Mammary epithelial cell (primary cell): ENCODE measurements at regions of chr1 and their contacts with region 1.

Region 1: DNA sequence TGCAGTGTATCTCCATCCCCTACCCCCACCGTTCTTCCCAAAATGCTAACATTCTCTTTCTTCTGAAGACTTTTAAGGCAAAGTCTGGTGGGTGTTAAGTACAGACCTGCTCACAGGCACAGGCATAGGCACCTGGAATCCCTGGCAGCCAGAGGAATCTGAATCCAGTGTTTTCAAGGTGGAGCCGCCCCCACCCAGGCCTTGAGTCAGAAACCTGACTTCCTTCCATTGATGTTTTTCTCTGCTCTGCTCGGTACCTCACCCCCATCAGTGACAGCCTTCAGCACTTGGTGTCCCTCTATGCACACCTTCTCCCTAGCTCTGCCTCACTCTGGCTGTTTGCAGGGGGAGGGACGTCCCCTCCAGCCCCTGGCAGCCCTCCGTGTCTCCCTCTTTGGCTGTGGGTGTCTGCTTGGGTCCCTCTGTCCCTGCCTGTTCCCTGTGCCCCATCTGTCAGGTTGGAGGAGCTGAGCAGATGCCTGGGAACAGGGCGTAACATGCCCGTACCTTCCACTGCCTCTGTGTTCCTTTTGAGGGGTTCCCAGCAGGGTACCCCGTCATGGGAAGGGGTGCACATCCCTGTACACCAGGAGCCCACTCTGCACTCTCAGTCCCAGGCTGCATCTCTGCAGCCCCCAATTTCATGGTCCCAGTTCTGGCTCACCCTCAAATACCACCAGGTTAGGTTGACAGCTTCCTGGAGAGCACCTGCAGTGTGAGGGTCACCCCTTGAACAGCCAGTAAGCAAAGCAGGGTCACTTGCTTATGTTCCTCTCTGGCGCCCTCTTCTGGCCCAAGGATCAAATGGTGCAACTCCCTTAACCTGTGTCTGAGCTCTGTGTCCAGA is 6.7 kb downstream of the NCDN start:
- DNase-seq: peak; percentile 71
- H3K4me3 ChIP-seq: no peak overlapping the region
- H3K27ac ChIP-seq: no peak overlapping the region
- H3K4me1 ChIP-seq: peaks cover 29% of the 10 kb centered on the region
- H3K27me3 ChIP-seq: no peaks in the 10 kb centered on the region
- CTCF ChIP-seq: peak; percentile 73 to 89

Region 2: DNA sequence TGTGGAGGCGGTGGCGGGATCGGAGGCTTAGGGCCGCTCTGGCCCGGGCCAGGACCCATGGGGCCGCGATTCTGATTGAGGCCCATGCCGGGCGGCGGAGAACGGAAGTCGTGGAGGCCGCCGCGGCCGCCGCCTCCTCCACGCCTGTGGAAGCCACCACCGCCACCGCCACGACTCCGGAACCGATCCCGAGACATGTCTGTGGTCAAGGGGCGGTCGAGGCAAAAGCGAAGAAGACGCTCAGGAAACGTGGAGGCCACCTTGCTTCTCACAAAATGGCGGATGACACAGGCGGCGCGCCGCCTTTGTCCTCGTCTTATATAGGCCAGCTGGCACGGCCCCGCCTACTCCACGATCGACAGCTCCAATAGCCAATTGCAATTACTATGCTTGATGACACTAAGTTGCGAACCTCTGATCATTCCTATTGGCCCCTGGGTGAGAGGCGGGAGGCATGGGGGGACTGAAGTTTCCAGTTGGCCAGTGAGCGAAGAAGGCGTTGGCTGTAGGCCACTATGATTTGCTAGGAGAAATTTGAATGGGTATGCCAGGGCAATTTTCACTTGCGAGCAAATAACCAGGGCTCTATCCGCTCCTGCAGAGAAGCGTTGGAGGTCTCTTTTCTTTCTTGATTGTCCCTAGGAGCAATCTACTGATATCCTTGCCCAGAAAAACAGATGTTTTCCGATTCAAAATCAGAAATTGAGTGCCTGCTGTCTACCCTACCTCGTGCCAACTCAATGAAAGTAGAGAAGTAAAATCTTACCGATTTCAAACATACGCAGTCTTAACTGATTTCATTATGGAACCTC is 371.2 kb before region 1 on chr1 and contains the start of gene SFPQ:
- CTCF ChIA-PET with region 1: no interaction called
- dilution Hi-C with region 1: no loop called
- in situ Hi-C with region 1: loop called in 1 of 2 experiments (anchors 10 kb)
- intact Hi-C with region 1: loop called (anchors 5 kb)
- DNase-seq: peak; percentile 98
- H3K4me3 ChIP-seq: peak within 1 kb of the TSS; percentile 93 to 100 (median 93)
- H3K27ac ChIP-seq: peak within 1 kb of the TSS; percentile 87
- H3K4me1 ChIP-seq: peaks cover 23% of the 10 kb centered on the region
- H3K27me3 ChIP-seq: no peaks in the 10 kb centered on the region
- CTCF ChIP-seq: no peak
- total RNA-seq, gene SFPQ: 156 to 255 TPM

Region 3: DNA sequence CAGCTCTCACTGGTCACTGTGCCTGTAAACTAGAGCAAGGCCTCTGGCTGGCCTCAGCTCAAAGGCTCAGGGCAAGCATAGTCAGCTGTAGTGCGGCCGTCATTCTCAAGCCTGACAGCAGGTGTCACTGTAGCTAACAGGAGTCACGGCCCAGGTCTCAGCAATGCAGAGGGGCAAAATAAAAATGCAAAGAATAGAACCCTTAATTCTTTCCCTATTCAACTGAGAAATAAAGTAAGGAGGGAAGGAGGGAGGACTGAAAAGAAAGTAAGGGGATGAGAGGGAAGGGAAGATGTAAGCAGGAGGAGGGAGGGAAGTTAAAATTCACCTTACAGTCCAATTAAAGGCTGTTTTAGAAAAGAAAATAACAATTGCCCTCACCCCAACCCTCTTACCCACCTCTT is 113.1 kb before region 1 on chr1:
- CTCF ChIA-PET with region 1: interaction called, 13 read pairs
- dilution Hi-C with region 1: loop called (anchors 5 kb)
- in situ Hi-C with region 1: loop called (anchors 5 kb)
- intact Hi-C with region 1: loop called (anchors 1 kb)
- DNase-seq: peak; percentile 59
- H3K4me3 ChIP-seq: no peak overlapping the region
- H3K27ac ChIP-seq: no peak overlapping the region
- H3K4me1 ChIP-seq: peaks cover 29% of the 10 kb centered on the region
- H3K27me3 ChIP-seq: peaks cover 2% of the 10 kb centered on the region
- CTCF ChIP-seq: peak; percentile 88 to 91

Region 4: GRCh38 chr1:35592991-35593694 is 28.9 kb after region 1 on chr1:
- CTCF ChIA-PET with region 1: no interaction called
- dilution Hi-C with region 1: no loop called
- in situ Hi-C with region 1: no loop called
- intact Hi-C with region 1: no loop called
- DNase-seq: no peak
- H3K4me3 ChIP-seq: no peak overlapping the region
- H3K27ac ChIP-seq: no peak overlapping the region
- H3K4me1 ChIP-seq: no peaks in the 10 kb centered on the region
- H3K27me3 ChIP-seq: no peaks in the 10 kb centered on the region
- CTCF ChIP-seq: no peak

Region 5: GRCh38 chr1:35715568-35716002 is 151.3 kb after region 1 on chr1:
- CTCF ChIA-PET with region 1: interaction called, 5 read pairs
- dilution Hi-C with region 1: no loop called
- in situ Hi-C with region 1: loop called in 1 of 2 experiments (anchors 5 kb)
- intact Hi-C with region 1: loop called (anchors 2 kb)
- DNase-seq: peak; percentile 57
- H3K4me3 ChIP-seq: no peak overlapping the region
- H3K27ac ChIP-seq: no peak overlapping the region
- H3K4me1 ChIP-seq: peaks cover 18% of the 10 kb centered on the region
- H3K27me3 ChIP-seq: no peaks in the 10 kb centered on the region
- CTCF ChIP-seq: peak; percentile 87 to 92

Region 6: GRCh38 chr1:35769759-35770446 is 205.6 kb after region 1 on chr1 and contains the start of gene CLSPN:
- CTCF ChIA-PET with region 1: interaction called, 5 read pairs
- dilution Hi-C with region 1: no loop called
- in situ Hi-C with region 1: loop called in 1 of 2 experiments (anchors 10 kb)
- intact Hi-C with region 1: loop called (anchors 1 kb)
- DNase-seq: peak; percentile 93
- H3K4me3 ChIP-seq: peak within 1 kb of the TSS; percentile 81 to 92 (median 84)
- H3K27ac ChIP-seq: peak within 1 kb of the TSS; percentile 76
- H3K4me1 ChIP-seq: no peaks in the 10 kb centered on the region
- H3K27me3 ChIP-seq: no peaks in the 10 kb centered on the region
- CTCF ChIP-seq: no peak
- total RNA-seq, gene CLSPN: 2.3 to 29.4 TPM

Region 7: GRCh38 chr1:35797380-35797779 is 233.1 kb after region 1 on chr1:
- CTCF ChIA-PET with region 1: no interaction called
- dilution Hi-C with region 1: no loop called
- in situ Hi-C with region 1: no loop called
- intact Hi-C with region 1: no loop called
- DNase-seq: no peak
- H3K4me3 ChIP-seq: no peak overlapping the region
- H3K27ac ChIP-seq: no peak overlapping the region
- H3K4me1 ChIP-seq: no peaks in the 10 kb centered on the region
- H3K27me3 ChIP-seq: no peaks in the 10 kb centered on the region
- CTCF ChIP-seq: no peak